ENCODE measurements at regions of chr13 and their contacts with region 1.

Region 1: DNA sequence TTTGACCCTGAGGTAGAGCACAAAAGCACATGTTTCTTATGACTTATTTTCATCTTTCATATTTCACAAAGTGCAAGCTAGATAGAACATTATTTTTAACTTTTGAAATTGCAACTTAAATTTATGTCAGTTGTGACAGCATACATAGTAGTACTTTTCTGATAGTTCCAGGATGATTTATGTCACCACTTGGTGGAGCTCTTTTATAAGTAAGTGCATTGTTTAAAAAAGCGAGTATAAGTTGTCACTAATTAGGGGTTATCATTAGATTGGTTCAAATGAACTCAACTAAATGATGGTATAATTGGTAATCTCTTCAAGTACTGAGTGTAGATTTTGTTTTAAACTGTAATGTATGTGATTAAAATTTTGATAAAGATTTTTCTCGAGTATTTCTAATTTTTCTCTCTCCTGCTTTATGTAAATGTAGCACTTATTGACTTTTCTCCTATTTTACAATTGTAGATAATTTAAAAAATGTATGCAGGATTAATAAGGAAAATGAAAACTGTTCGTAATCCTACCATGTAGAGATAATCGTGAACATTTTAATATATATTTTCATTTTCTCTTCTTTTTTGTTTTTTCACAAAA is 31.1 kb downstream of the RB1 start:
- DNase-seq: peak in 2 of 9 experiments; percentile 63 to 73
- ATAC-seq: peak; percentile 66
- H3K4me3 ChIP-seq: no peak overlapping the region
- H3K4me3 Mint-ChIP-seq: no peak overlapping the region
- H3K27ac ChIP-seq: no peak overlapping the region
- H3K27ac Mint-ChIP-seq: no peak overlapping the region
- H3K4me1 ChIP-seq: no peaks in the 10 kb centered on the region
- H3K4me1 Mint-ChIP-seq: peaks cover 7% of the 10 kb centered on the region
- H3K27me3 ChIP-seq: no peaks in the 10 kb centered on the region
- H3K27me3 Mint-ChIP-seq: no peaks in the 10 kb centered on the region
- CTCF ChIP-seq: peak; percentile 88

Region 2: GRCh38 chr13:48296528-48296927 is 38.1 kb before region 1 on chr13:
- CTCF ChIA-PET with region 1: no interaction called
- POLR2A ChIA-PET with region 1: no interaction called
- intact Hi-C with region 1: no loop called
- DNase-seq: no peak
- ATAC-seq: no peak
- H3K4me3 ChIP-seq: no peak overlapping the region
- H3K4me3 Mint-ChIP-seq: no peak overlapping the region
- H3K27ac ChIP-seq: no peak overlapping the region
- H3K27ac Mint-ChIP-seq: no peak overlapping the region
- H3K4me1 ChIP-seq: no peaks in the 10 kb centered on the region
- H3K4me1 Mint-ChIP-seq: no peaks in the 10 kb centered on the region
- H3K27me3 ChIP-seq: no peaks in the 10 kb centered on the region
- H3K27me3 Mint-ChIP-seq: no peaks in the 10 kb centered on the region
- CTCF ChIP-seq: no peak

Region 3: GRCh38 chr13:48356750-48357149 is 22.1 kb after region 1 on chr13:
- CTCF ChIA-PET with region 1: no interaction called
- POLR2A ChIA-PET with region 1: no interaction called
- intact Hi-C with region 1: no loop called
- DNase-seq: no peak
- ATAC-seq: no peak
- H3K4me3 ChIP-seq: no peak overlapping the region
- H3K4me3 Mint-ChIP-seq: no peak overlapping the region
- H3K27ac ChIP-seq: no peak overlapping the region
- H3K27ac Mint-ChIP-seq: no peak overlapping the region
- H3K4me1 ChIP-seq: no peaks in the 10 kb centered on the region
- H3K4me1 Mint-ChIP-seq: no peaks in the 10 kb centered on the region
- H3K27me3 ChIP-seq: no peaks in the 10 kb centered on the region
- H3K27me3 Mint-ChIP-seq: no peaks in the 10 kb centered on the region
- CTCF ChIP-seq: no peak

Region 4: DNA sequence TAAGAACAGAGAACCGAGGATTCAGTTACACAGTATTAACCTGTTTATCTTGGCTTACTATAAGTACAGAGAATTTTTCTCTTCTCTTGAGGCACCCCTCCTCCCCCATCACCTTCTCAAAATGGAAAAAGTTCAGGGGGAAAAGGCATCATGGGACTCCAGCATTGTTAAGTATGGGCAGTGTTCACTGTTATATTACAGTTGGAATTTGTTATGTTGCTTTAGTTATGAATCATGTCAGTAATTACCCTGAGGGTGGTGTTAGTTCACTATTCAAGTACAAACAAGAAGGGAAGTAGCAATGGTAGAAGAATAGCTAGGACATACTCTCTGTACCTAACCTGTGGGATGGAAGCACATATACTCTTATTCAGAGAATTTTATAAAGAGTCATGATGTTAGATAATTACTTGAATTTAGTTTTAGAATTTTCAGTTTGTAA is 66.2 kb after region 1 on chr13:
- CTCF ChIA-PET with region 1: no interaction called
- POLR2A ChIA-PET with region 1: no interaction called
- intact Hi-C with region 1: loop called in 1 of 2 experiments (anchors 5 kb)
- DNase-seq: peak in 2 of 9 experiments; percentile 24 to 48
- ATAC-seq: peak; percentile 38
- H3K4me3 ChIP-seq: no peak overlapping the region
- H3K4me3 Mint-ChIP-seq: no peak overlapping the region
- H3K27ac ChIP-seq: peak overlapping the region in 1 of 2 experiments; percentile 73
- H3K27ac Mint-ChIP-seq: peak overlapping the region; percentile 34
- H3K4me1 ChIP-seq: peaks cover 33% of the 10 kb centered on the region
- H3K4me1 Mint-ChIP-seq: peaks cover 46% of the 10 kb centered on the region
- H3K27me3 ChIP-seq: no peaks in the 10 kb centered on the region
- H3K27me3 Mint-ChIP-seq: no peaks in the 10 kb centered on the region
- CTCF ChIP-seq: no peak

Region 5: DNA sequence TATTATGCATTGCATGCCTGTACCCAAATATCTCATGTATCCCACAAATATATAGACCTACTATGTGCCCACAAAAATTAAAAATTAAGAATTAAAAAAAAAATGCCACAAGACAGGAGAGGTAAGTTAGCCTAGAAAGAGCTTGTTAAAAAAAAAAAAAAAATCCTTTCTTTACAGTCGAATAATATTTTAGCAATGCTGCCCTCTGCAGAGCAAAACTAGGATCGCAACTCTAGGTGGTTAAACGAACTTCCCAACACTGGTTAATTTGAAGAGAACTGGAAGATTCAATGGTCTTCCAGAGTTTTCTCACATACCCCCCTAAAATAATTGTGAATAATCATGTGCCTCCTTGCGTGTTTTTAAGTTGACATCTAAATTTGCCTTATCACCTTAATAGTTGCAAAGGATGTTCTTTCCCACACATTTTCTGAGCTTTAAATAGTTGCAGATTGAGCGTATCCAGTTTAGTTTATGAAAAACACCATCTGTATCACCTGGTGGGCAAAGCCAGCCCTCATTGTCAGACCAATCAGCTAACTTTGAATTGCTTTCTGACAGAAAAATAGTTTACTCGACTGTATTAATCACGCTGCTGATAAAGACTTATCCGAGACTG is 245.7 kb after region 1 on chr13:
- CTCF ChIA-PET with region 1: interaction called, 147 read pairs
- POLR2A ChIA-PET with region 1: interaction called, 7 read pairs
- intact Hi-C with region 1: loop called (anchors 1 kb)
- DNase-seq: peak; percentile 50 to 82 (median 79)
- ATAC-seq: peak; percentile 79
- H3K4me3 ChIP-seq: no peak overlapping the region
- H3K4me3 Mint-ChIP-seq: no peak overlapping the region
- H3K27ac ChIP-seq: no peak overlapping the region
- H3K27ac Mint-ChIP-seq: no peak overlapping the region
- H3K4me1 ChIP-seq: no peaks in the 10 kb centered on the region
- H3K4me1 Mint-ChIP-seq: peaks cover 3% of the 10 kb centered on the region
- H3K27me3 ChIP-seq: no peaks in the 10 kb centered on the region
- H3K27me3 Mint-ChIP-seq: peaks cover 30% of the 10 kb centered on the region
- CTCF ChIP-seq: peak; percentile 85

Region 6: DNA sequence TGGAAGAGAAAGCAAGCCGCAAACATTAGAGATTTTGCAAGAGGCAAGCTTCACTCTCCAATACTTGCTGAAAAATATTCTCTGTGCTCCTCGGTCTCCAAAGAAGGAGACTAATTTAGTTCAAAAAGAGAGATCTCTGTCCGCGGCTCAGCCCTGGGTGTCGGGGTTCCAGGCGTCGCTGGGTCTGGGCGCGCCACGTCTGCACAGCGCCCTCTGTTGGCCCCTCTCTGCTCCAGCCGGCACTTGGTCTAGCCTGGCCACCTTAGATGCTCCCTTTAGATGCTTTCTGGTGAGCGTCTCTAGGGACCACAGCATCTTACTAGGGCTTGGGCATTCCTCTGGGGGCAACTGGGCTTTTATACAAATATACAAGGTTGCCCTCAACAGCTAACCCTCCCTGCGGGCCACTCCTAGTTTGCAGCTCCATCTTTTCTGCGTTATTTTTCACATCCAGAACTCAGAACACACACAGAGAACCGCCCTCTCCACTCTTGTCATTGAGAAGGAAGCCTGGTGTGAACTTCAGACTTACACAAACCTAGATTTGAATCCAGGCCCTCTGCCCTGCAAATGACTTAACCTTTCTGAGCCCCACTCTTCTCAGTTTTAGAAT is 397.4 kb after region 1 on chr13:
- CTCF ChIA-PET with region 1: interaction called, 8 read pairs
- POLR2A ChIA-PET with region 1: no interaction called
- intact Hi-C with region 1: loop called (anchors 1 kb)
- DNase-seq: peak; percentile 29 to 72 (median 61)
- ATAC-seq: peak; percentile 77
- H3K4me3 ChIP-seq: peak overlapping the region; percentile 9 to 29
- H3K4me3 Mint-ChIP-seq: peak overlapping the region; percentile 74
- H3K27ac ChIP-seq: no peak overlapping the region
- H3K27ac Mint-ChIP-seq: no peak overlapping the region
- H3K4me1 ChIP-seq: no peaks in the 10 kb centered on the region
- H3K4me1 Mint-ChIP-seq: peaks cover 2% of the 10 kb centered on the region
- H3K27me3 ChIP-seq: no peaks in the 10 kb centered on the region
- H3K27me3 Mint-ChIP-seq: no peaks in the 10 kb centered on the region
- CTCF ChIP-seq: peak; percentile 70